Posterior vena cava (tissue), 2 donors: ENCODE measurements at regions of chr14 and their contacts with region 1.

Region 1: DNA sequence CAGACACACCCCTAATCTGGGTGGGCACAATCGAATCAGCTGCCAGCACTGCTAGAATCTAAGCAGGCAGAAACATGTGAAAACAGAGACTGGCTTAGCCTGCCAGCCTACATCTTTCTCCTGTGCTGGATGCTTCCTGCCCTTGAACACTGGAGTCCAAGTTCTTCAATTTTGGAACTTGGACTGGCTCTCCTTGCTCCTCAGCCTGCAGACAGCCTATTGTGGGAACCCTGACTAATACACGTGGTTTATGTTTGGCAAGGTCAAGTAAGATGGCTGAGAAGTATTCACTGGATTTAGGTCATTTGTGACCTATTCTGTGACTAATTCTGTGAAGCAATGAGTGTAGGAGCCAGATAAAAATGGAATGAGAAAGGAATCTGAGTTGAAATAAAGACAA is 11.0 kb downstream of the GPR135 start:
- DNase-seq: no peak

Region 2: DNA sequence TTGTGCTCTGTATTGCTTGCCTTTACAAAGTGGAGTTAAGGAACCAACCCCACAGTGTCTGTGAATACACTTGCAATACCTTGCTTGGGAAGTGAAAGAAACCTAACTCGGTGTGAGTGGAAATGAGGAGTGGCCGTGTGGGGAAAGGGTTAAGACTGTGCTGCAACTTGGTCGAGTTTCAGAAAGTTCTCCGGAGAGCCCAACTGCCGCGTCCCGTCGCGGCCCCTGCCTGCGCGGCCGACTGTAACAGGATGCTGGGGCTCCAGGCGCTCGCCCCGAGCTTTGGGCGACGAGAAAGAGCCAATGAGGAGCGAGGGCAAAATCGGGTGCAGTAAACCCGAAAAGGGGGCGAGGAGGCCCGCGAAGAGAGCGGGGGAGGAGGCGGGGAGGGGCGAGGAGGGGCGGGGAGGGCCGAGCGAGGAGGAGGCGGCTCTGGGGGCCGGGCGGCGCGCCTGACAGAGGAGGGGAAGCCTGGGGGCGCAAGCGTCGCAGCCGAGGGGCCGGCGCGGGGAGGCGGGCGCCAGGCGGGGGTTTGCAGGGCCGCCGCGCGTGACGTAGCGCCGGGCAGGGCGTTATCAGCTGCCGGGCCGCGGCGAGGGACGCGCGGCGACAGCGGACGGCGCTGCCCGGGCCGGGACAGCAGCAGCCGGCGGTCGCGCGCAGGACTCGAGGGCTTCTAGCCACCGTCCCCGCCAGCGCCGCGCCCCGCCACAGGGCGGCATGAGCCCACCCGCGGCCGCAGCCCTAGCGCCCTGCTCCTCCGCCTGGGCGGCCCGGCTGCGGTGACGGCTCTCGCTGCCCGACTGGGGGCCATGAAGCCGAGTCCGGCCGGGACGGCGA is 816.5 kb before region 1 on chr14 and contains the start of gene DACT1:
- intact Hi-C with region 1: loop called in 1 of 2 experiments (anchors 5 kb)
- DNase-seq: peak; percentile 90
- total RNA-seq, gene DACT1: 13.7 to 18.8 TPM

Region 3: DNA sequence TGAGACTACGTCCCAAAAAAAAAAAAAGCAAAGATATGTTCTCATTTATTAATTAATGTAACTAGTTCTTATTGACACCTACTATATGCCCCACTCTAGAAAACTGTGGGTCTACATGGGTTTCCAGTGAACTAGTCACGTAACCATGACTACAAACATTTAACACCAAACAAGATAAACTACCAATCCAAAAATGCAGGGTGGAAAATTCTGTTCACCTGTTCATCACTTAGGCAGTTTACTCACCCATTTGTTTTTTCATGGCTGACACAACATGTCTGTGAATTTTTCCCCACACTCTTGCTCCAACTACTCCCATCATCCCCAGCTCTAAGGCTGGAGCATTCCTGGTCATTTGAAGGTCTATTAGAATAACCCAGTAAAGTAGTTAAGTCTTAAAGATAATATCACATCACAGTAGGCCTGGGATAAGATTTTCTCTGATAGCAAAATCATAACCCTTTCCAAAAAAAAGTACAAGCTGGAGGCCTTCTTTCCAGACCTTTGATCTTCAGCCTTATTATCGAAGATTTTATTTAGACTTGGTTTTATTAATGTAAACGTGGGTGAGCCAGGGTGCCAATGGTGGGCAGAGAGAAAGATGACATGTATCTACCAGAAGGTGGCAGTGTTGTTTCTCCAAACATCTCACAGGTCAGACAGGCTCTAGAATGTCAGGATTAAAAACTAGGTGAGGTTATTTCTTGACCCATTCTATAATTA is 327.3 kb before region 1 on chr14:
- intact Hi-C with region 1: loop called in 1 of 2 experiments (anchors 5 kb)
- DNase-seq: no peak

Region 4: DNA sequence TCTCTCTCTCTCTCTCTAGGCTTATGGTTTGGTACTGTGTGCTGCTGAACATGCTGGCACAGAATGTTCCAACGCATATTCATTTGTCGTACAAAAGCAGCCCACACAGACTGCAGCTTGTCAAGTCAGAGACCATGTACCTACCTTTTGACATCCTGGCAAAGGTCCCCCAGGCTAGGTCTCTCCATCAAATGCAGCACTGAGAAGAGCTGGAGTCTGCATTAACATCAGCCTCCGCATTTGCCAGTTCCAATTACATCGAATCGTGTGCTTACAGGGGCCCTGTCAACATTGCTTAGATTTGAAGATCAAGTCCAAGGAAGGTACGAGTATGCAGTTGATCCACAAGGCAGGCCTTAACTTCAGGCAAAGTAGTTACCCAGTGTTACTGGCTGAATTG is 36.8 kb before region 1 on chr14:
- intact Hi-C with region 1: no loop called
- DNase-seq: no peak

Region 5: DNA sequence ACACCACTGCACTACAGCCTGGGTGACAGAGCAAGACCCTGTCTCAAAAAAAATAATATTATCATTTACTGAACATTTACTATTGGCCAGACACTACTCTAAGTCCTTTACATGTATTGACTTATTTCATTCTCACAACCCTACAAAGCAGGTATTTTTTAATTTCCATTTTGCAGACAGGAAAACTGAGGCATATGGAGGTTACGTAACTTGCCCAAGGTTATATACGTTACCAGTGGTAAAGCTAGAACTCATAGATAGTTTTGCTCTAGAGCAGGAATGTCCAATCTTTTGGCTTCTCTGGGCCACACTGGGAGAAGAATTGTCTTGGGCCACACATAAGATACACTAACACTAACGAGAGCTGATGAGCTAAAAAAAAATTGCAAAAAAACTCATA is 24.4 kb after region 1 on chr14:
- intact Hi-C with region 1: loop called in 1 of 2 experiments (anchors 2 kb)
- DNase-seq: no peak

Region 6: DNA sequence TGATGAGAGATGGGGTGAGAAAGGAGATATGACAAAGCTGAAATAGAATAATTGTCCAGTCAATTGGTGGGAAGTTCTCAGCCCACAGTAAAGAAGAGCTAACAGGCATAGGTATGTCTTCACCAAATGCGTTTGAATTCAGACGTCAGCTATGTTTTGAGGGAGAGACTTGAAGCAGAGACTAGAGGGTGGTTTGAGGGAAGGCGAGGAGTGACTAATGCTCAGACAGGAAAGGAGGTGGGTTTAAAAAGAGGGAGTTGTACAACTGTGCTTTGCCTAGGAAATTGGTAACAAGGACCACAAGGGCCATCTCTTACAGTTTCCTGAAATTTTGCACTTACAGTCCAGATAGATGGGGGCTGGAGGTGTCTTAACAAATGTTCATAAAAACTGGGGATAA is 36.6 kb after region 1 on chr14:
- intact Hi-C with region 1: no loop called
- DNase-seq: no peak